ENCODE measurements at regions of chr10 and their contacts with region 1.

Region 1: GRCh38 chr10:44517635-44518034 is 132.7 kb upstream of the CXCL12 start:
- DNase-seq: no peak
- ATAC-seq: peak; percentile 58
- H3K4me3 ChIP-seq: no peak overlapping the region
- H3K27ac ChIP-seq: no peak overlapping the region
- H3K4me1 ChIP-seq: no peaks in the 10 kb centered on the region
- H3K27me3 ChIP-seq: no peaks in the 10 kb centered on the region
- CTCF ChIP-seq: peak; percentile 13 to 36 (median 32); a peak in 4 of 6 replicates
- EP300 ChIP-seq: no peak
- POLR2A ChIP-seq: no peak
- RAD21 ChIP-seq: no peak

Region 2: GRCh38 chr10:44416021-44416771 is 101.4 kb before region 1 on chr10:
- CTCF ChIA-PET with region 1: no interaction called
- POLR2A ChIA-PET with region 1: no interaction called
- RAD21 ChIA-PET with region 1: no interaction called
- SMC1A ChIA-PET with region 1: no interaction called
- in situ Hi-C with region 1: loop called (anchors 25 kb)
- intact Hi-C with region 1: no loop called
- DNase-seq: no peak
- ATAC-seq: no peak
- H3K4me3 ChIP-seq: no peak overlapping the region
- H3K27ac ChIP-seq: no peak overlapping the region
- H3K4me1 ChIP-seq: no peaks in the 10 kb centered on the region
- H3K27me3 ChIP-seq: no peaks in the 10 kb centered on the region; a peak in 1 of 4 replicates
- CTCF ChIP-seq: no peak
- EP300 ChIP-seq: no peak
- POLR2A ChIP-seq: no peak
- RAD21 ChIP-seq: no peak

Region 3: GRCh38 chr10:44552726-44553125 is 35.1 kb after region 1 on chr10:
- CTCF ChIA-PET with region 1: no interaction called
- POLR2A ChIA-PET with region 1: no interaction called
- RAD21 ChIA-PET with region 1: no interaction called
- SMC1A ChIA-PET with region 1: no interaction called
- in situ Hi-C with region 1: no loop called
- intact Hi-C with region 1: no loop called
- DNase-seq: no peak
- ATAC-seq: no peak
- H3K4me3 ChIP-seq: no peak overlapping the region
- H3K27ac ChIP-seq: no peak overlapping the region
- H3K4me1 ChIP-seq: no peaks in the 10 kb centered on the region
- H3K27me3 ChIP-seq: no peaks in the 10 kb centered on the region
- CTCF ChIP-seq: no peak
- EP300 ChIP-seq: no peak
- POLR2A ChIP-seq: no peak
- RAD21 ChIP-seq: no peak

Region 4: DNA sequence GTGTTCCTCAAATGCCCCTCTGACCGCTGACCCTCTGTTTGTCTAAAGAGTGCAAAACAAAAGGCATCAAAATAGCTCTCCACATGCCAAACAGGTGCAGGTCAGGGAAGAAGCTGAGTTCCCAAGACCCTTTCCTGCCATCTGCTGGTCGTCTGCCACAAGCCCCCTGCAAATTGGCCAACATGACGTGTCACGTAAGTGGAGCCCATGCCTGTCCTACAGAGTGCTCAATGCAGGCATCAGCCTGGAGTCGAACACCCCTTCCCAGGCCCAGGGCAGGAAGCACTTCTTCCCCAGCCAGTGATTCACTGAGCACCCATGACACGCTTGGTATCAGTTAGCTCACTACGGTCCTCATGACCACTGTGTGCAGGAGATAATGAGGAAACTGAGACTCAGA is 407.6 kb after region 1 on chr10:
- CTCF ChIA-PET with region 1: no interaction called
- POLR2A ChIA-PET with region 1: no interaction called
- RAD21 ChIA-PET with region 1: no interaction called
- SMC1A ChIA-PET with region 1: no interaction called
- in situ Hi-C with region 1: no loop called
- intact Hi-C with region 1: no loop called
- DNase-seq: no peak
- ATAC-seq: peak; percentile 41
- H3K4me3 ChIP-seq: no peak overlapping the region
- H3K27ac ChIP-seq: no peak overlapping the region
- H3K4me1 ChIP-seq: no peaks in the 10 kb centered on the region
- H3K27me3 ChIP-seq: peaks cover 0 to 1% of the 10 kb centered on the region in 2 experiments; a peak in 1 of 4 replicates
- CTCF ChIP-seq: peak in 1 of 3 experiments; percentile 44; a peak in 2 of 6 replicates
- EP300 ChIP-seq: no peak
- POLR2A ChIP-seq: no peak
- RAD21 ChIP-seq: no peak